Natural killer cell (primary cell): ENCODE measurements at regions of chr3 and their contacts with region 1.

Region 1: GRCh38 chr3:122458992-122459391 is 43.1 kb upstream of the WDR5B start:
- DNase-seq: peak in 1 of 2 donors; percentile 28
- ATAC-seq: peak in 1 of 3 donors; percentile 34
- H3K4me3 ChIP-seq: no peak overlapping the region
- H3K4me3 Mint-ChIP-seq: no peak overlapping the region
- H3K27ac ChIP-seq: no peak overlapping the region
- H3K27ac Mint-ChIP-seq: peak overlapping the region; percentile 8 to 39
- H3K4me1 ChIP-seq: no peaks in the 10 kb centered on the region
- H3K4me1 Mint-ChIP-seq: peaks cover 0 to 13% of the 10 kb centered on the region in 2 donors
- H3K27me3 ChIP-seq: no peaks in the 10 kb centered on the region
- H3K27me3 Mint-ChIP-seq: no peaks in the 10 kb centered on the region
- CTCF ChIP-seq: peak; percentile 44

Region 2: DNA sequence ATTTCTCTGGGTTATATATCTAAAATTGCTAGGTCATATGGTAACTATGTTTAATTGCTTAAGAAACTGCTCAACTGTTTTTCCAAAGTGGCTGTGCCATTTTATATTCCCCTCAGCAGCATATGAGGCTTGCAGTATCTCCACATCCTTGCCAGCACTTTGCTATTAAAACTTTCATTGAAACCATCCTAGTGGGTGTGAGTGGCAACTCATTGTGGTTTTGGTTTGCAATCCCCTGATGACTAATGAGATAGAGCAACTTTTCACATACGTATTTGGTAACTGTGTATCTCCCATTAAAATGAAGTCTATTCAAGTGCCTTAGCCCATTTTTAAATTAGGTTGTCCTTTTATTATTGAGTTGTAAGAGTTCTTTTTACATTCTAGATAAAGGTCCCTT is 38.4 kb after region 1 on chr3:
- intact Hi-C with region 1: loop called (anchors 5 kb)
- DNase-seq: peak; percentile 23 to 65
- ATAC-seq: peak; percentile 85 to 92 (median 88)
- H3K4me3 ChIP-seq: no peak overlapping the region
- H3K4me3 Mint-ChIP-seq: peak overlapping the region; percentile 30
- H3K27ac ChIP-seq: no peak overlapping the region
- H3K27ac Mint-ChIP-seq: peak overlapping the region; percentile 54 to 85
- H3K4me1 ChIP-seq: peaks cover 8% of the 10 kb centered on the region
- H3K4me1 Mint-ChIP-seq: peaks cover 48 to 51% of the 10 kb centered on the region in 2 donors
- H3K27me3 ChIP-seq: no peaks in the 10 kb centered on the region
- H3K27me3 Mint-ChIP-seq: no peaks in the 10 kb centered on the region
- CTCF ChIP-seq: no peak